K562 (cell line): ENCODE measurements at regions of chr9 and their contacts with region 1.

Region 1: GRCh38 chr9:133252301-133252780 is 22.7 kb downstream of the ABO start:
- DNase-seq: no peak
- ATAC-seq: peak; percentile 61
- H3K4me3 ChIP-seq: no peak overlapping the region
- H3K27ac ChIP-seq: no peak overlapping the region
- H3K4me1 ChIP-seq: peaks cover 0 to 36% of the 10 kb centered on the region in 2 experiments; a peak in 2 of 5 replicates
- H3K27me3 ChIP-seq: no peaks in the 10 kb centered on the region; a peak in 1 of 5 replicates
- CTCF ChIP-seq: no peak
- EP300 ChIP-seq: no peak
- POLR2A ChIP-seq: no peak
- RAD21 ChIP-seq: no peak

Region 2: GRCh38 chr9:133238851-133239532 is 13.3 kb before region 1 on chr9:
- CTCF ChIA-PET with region 1: no interaction called
- POLR2A ChIA-PET with region 1: interaction called, 12 read pairs
- in situ Hi-C with region 1: no loop called
- intact Hi-C with region 1: no loop called
- DNase-seq: peak; percentile 91 to 93 (median 92)
- ATAC-seq: peak; percentile 91
- H3K4me3 ChIP-seq: peak overlapping the region; percentile 40
- H3K27ac ChIP-seq: peak overlapping the region; percentile 64
- H3K4me1 ChIP-seq: peaks cover 6 to 39% of the 10 kb centered on the region in 2 experiments
- H3K27me3 ChIP-seq: no peaks in the 10 kb centered on the region
- CTCF ChIP-seq: peak; percentile 95 to 99 (median 97)
- EP300 ChIP-seq: no peak
- POLR2A ChIP-seq: no peak
- RAD21 ChIP-seq: peak; percentile 75 to 77

Region 3: DNA sequence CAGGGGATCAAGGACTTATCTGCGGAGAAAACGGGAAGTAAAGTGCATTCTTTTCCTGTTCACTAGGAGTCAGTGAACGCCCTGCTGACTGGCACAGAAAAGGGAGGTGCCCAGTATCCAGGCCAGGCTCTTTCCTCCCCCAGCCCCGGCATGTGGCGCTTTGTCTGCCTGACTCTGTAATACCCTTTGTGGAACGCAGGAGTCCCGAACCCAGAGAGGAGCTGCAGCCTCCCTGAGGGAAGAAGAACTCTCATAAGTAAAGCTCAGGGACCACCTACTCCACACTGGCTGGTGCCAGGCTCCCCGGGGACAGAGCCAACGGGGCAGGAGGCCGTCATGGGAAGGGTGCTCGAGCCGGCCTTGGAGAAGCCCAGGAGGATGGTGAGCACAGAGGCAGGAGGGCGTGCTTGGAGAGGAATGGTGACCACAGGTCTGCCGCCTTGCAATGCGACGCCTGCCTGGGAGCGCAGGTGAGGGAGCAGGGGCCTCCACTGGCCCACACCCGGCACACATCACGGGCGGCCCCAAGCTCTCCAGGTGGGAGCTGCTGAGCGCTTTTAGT is 708.3 kb after region 1 on chr9:
- CTCF ChIA-PET with region 1: no interaction called
- POLR2A ChIA-PET with region 1: no interaction called
- in situ Hi-C with region 1: no loop called
- intact Hi-C with region 1: no loop called
- DNase-seq: no peak
- ATAC-seq: no peak
- H3K4me3 ChIP-seq: no peak overlapping the region
- H3K27ac ChIP-seq: no peak overlapping the region
- H3K4me1 ChIP-seq: peaks cover 0 to 8% of the 10 kb centered on the region in 2 experiments; a peak in 2 of 5 replicates
- H3K27me3 ChIP-seq: peaks cover 9 to 49% of the 10 kb centered on the region in 2 experiments; a peak in 4 of 5 replicates
- CTCF ChIP-seq: no peak
- EP300 ChIP-seq: no peak
- POLR2A ChIP-seq: no peak
- RAD21 ChIP-seq: no peak